Activated CD4-positive, alpha-beta memory T cell treated with anti-CD3 and anti-CD28 coated beads, Interleukin-2, amount 10 ng/mL, durations not matched to agents 7 days and 5 days (primary cell): ENCODE measurements at regions of chr1 and their contacts with region 1.

Region 1: DNA sequence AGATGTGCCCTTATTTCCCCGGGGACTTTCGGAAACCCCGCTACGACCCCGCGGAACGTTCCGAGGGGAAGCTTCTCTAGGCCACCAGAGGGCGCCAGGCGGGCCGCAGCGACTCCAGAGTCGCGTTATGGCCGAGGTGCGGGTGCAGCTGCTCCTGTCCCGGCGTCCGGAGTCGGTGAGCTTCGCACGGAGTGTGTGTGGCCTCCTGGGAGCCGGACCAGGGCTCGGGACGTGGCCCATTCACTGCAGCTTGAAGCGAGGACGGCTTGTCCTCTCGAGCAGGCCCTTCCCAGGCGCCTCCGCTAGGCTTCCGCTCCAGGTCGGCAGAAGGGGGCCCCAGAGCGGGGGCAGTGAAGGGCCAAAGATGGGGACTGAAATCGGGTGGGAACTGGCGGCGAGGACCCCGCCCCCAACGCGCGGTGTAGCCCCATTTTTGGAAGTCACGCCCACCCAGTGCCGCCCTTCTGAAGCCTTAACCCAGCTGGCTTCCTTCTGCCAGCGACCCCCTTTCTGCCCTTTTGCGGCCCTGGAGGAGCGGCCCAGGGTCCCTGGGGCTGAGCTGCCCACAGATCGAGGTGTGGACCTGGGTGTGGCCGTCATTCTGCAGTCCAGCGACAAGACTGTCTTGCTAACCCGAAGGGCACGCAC is at the start of gene NUDT17:
- DNase-seq: peak; percentile 79
- H3K4me3 Mint-ChIP-seq: no peak within 1 kb of the TSS
- H3K27ac Mint-ChIP-seq: peak within 1 kb of the TSS; percentile 45
- H3K4me1 Mint-ChIP-seq: peaks cover 7% of the 10 kb centered on the region
- H3K27me3 Mint-ChIP-seq: no peaks in the 10 kb centered on the region
- total RNA-seq, gene NUDT17: 2.5 to 2.7 TPM

Region 2: GRCh38 chr1:145751491-145752037 is 94.1 kb before region 1 on chr1:
- CTCF ChIA-PET with region 1: no interaction called
- POLR2A ChIA-PET with region 1: no interaction called
- DNase-seq: no peak
- H3K4me3 Mint-ChIP-seq: no peak overlapping the region
- H3K27ac Mint-ChIP-seq: no peak overlapping the region
- H3K4me1 Mint-ChIP-seq: no peaks in the 10 kb centered on the region
- H3K27me3 Mint-ChIP-seq: no peaks in the 10 kb centered on the region

Region 3: GRCh38 chr1:145858894-145859490 is 13.4 kb after region 1 on chr1 and contains the start of gene PIAS3:
- CTCF ChIA-PET with region 1: interaction called, 182 read pairs
- POLR2A ChIA-PET with region 1: interaction called, 71 read pairs
- DNase-seq: peak; percentile 90
- H3K4me3 Mint-ChIP-seq: peak within 1 kb of the TSS; percentile 97
- H3K27ac Mint-ChIP-seq: peak within 1 kb of the TSS; percentile 76
- H3K4me1 Mint-ChIP-seq: peaks cover 16% of the 10 kb centered on the region
- H3K27me3 Mint-ChIP-seq: peaks cover 12% of the 10 kb centered on the region
- total RNA-seq, gene PIAS3: 21.2 to 21.7 TPM

Region 4: GRCh38 chr1:145885738-145886287 is 40.2 kb after region 1 on chr1 and contains the start of gene ANKRD35:
- CTCF ChIA-PET with region 1: interaction called, 58 read pairs
- POLR2A ChIA-PET with region 1: no interaction called
- DNase-seq: peak; percentile 91
- H3K4me3 Mint-ChIP-seq: peak within 1 kb of the TSS; percentile 75
- H3K27ac Mint-ChIP-seq: no peak within 1 kb of the TSS
- H3K4me1 Mint-ChIP-seq: peaks cover 17% of the 10 kb centered on the region
- H3K27me3 Mint-ChIP-seq: peaks cover 33% of the 10 kb centered on the region
- total RNA-seq, gene ANKRD35: 0.33 to 0.35 TPM

Region 5: DNA sequence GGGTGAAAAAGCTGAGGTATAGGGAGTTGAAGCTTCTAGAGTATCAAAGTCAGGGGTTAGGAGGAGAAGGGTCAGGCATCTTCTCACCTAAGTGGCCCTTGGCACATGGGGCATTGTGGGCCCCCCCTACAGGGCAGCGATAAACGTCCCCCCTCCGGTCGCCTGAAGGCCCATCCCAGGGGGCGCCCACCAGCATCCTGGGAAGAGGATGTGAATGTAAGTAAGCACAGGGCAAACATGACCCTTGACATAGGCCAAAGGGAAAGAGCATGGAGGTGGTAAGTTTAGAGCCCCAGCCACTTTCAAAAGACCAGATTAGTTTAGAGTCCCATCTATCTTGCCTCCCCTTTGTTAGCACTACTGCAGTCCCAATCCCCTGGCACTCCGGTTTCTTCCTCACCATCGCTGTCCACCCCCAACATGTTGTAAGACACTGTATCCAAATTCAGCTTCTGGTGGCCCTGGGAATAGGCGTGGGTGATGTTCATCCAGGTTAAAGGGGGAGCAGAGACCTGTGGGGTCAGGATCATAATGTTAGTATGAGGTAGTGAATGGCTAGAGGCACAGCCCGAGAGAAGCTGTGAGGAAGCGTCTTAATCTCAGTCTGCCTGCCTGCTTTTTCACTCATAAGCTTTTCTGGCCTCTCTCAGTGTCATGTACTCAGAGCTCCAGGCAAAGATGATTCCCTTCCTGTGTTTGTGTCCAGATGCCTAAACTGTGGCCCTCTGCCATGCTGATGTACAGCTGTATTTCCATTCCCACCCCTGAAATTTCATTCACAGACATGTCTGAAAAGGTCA is 61.5 kb after region 1 on chr1:
- CTCF ChIA-PET with region 1: interaction called, 27 read pairs
- POLR2A ChIA-PET with region 1: interaction called, 4 read pairs
- DNase-seq: no peak
- H3K4me3 Mint-ChIP-seq: no peak overlapping the region
- H3K27ac Mint-ChIP-seq: no peak overlapping the region
- H3K4me1 Mint-ChIP-seq: peaks cover 9% of the 10 kb centered on the region
- H3K27me3 Mint-ChIP-seq: no peaks in the 10 kb centered on the region

Region 6: DNA sequence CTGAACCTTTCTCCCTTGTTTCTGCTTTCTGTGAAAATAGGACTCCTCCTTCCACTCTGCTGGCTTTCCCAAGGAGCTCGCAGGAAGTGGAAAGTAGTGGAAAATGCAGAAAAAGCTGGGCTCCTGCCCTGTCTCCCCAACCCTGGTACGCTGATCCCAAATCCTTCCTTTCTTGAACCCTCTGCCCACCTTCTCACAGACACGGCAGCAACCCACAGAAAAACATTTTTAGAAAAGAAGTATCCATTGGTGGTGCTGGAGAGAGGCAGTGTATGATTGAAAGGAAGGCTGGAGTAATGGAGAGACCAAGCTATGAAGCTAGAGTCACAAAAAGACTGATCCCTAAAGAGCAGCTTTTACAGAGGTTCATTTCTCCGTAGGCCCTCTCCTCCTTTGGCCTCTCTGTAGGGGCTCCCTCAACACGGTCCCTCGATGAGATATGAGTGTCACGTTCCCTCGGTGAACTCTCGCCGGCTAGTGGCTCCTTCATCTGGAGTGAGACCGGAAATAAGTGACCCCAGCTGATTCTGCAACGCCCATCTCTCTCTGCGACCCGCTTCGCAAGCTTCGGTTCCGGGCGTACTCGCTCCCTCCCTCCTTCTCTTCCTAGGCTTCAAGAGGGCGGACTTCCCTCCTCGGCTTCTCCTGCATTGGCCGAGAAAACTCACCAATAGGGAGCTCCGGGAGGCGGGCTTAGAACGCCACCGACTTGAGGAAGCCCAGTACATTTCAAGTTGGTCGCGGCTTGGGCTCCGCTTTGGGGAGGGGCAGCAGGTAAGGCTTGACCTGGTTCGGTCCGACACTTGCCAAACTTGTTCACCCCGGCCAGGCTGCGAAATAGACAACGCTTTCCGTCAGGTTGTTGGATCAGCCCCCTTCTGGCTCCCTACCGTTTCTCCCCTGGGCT is 118.6 kb after region 1 on chr1 and contains the starts of genes ANKRD34A and POLR3GL:
- CTCF ChIA-PET with region 1: interaction called, 25 read pairs
- POLR2A ChIA-PET with region 1: interaction called, 13 read pairs
- DNase-seq: peak; percentile 95
- H3K4me3 Mint-ChIP-seq: peak within 1 kb of the TSS; percentile 96
- H3K27ac Mint-ChIP-seq: peak within 1 kb of the TSS; percentile 79
- H3K4me1 Mint-ChIP-seq: peaks cover 50% of the 10 kb centered on the region
- H3K27me3 Mint-ChIP-seq: peaks cover 5% of the 10 kb centered on the region
- total RNA-seq, gene ANKRD34A: 2.9 to 3.7 TPM
- total RNA-seq, gene POLR3GL: 32.4 to 33.7 TPM

Region 7: GRCh38 chr1:146007506-146008133 is 162.0 kb after region 1 on chr1:
- CTCF ChIA-PET with region 1: interaction called, 89 read pairs
- POLR2A ChIA-PET with region 1: interaction called, 3 read pairs
- DNase-seq: no peak
- H3K4me3 Mint-ChIP-seq: peak overlapping the region; percentile 55
- H3K27ac Mint-ChIP-seq: peak overlapping the region; percentile 87
- H3K4me1 Mint-ChIP-seq: peaks cover 36% of the 10 kb centered on the region
- H3K27me3 Mint-ChIP-seq: no peaks in the 10 kb centered on the region

Region 8: DNA sequence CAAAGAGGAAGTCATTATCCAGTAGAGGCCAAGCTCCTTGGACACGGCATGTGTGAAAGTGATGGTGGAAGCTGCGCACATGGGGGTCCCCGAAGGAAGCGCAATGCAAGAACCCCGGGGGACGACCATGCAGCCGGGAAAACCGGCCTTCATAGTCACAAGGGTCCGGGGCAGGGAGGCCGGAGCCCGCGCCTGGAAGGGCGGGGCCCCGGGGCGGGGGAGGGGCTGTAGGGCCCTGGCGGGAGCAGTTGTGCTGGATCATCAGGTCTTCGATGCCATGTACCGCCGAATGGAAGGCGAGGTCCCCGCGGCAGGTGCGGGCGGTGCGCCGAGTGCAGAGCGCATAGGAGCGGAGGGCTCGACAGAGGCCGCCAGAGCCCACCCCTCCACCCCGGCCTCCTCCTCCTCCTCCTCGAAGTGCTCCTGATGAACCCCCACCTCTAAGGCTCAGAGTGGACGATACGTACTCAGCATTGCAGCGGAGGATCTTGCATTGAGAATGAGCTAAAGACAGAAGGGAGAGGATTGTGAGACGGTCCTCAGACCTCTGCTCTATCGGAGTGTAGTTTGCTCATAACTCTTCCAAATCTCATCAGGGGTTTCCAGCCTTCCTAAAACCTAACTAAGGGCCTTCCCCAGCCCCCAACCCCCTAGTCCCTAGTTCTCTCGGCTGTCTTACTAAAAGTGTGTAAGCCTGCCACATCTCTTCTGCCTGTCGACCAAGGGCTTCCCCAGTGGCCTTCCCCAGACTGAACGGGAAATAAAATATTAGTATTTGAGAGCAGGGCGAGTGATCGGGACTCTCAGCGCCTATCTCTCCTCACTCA is 173.8 kb after region 1 on chr1:
- CTCF ChIA-PET with region 1: interaction called, 41 read pairs
- POLR2A ChIA-PET with region 1: interaction called, 3 read pairs
- DNase-seq: no peak
- H3K4me3 Mint-ChIP-seq: no peak overlapping the region
- H3K27ac Mint-ChIP-seq: no peak overlapping the region
- H3K4me1 Mint-ChIP-seq: peaks cover 9% of the 10 kb centered on the region
- H3K27me3 Mint-ChIP-seq: peaks cover 73% of the 10 kb centered on the region